CD8-positive, alpha-beta T cell (primary cell): ENCODE measurements at regions of chr12 and their contacts with region 1.

Region 1: DNA sequence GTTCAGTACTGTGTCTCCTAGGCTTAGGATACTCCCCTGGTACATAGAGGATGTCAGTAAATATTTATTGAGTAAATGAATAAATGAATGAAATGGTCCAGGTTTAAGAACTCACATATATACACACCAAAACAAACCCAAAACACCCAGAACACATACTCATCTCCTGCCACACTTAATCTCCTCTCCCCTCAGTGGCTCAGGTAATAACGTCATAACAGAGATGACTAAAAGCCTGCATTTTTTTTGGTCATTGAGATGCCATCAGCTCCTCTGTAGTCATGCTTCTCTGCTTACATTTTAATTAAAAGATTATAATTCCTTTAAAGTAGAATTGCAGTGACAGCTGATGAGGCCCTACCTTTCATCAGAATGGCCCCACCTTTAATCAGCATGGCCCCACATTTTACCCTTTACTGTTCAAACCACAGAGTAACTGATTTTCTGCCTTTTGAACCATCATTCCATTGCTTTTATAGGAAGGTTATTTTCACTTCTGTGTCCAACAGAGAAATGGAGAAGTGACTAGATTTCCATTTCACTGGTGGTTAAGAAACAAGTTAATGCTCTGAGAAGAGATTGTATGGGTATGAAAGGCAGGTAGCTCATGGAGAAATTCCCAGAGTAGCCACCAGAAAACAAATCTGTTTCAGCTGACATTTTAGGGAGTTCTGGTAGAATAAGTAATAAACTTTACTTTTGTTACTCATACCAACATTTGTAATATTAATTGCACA is 193.4 kb upstream of the ATP2B1 start:
- DNase-seq: no peak
- ATAC-seq: no peak
- H3K4me3 ChIP-seq: no peak overlapping the region
- H3K4me3 Mint-ChIP-seq: no peak overlapping the region
- H3K27ac ChIP-seq: no peak overlapping the region
- H3K27ac Mint-ChIP-seq: no peak overlapping the region
- H3K4me1 ChIP-seq: no peaks in the 10 kb centered on the region
- H3K4me1 Mint-ChIP-seq: no peaks in the 10 kb centered on the region
- H3K27me3 ChIP-seq: no peaks in the 10 kb centered on the region
- H3K27me3 Mint-ChIP-seq: no peaks in the 10 kb centered on the region
- CTCF ChIP-seq: no peak

Region 2: GRCh38 chr12:89833337-89834252 is 68.5 kb before region 1 on chr12:
- CTCF ChIA-PET with region 1: no interaction called
- POLR2A ChIA-PET with region 1: no interaction called
- intact Hi-C with region 1: loop called in 1 of 2 experiments (anchors 5 kb)
- DNase-seq: no peak
- ATAC-seq: no peak
- H3K4me3 ChIP-seq: no peak overlapping the region
- H3K4me3 Mint-ChIP-seq: no peak overlapping the region
- H3K27ac ChIP-seq: no peak overlapping the region
- H3K27ac Mint-ChIP-seq: no peak overlapping the region
- H3K4me1 ChIP-seq: no peaks in the 10 kb centered on the region
- H3K4me1 Mint-ChIP-seq: no peaks in the 10 kb centered on the region
- H3K27me3 ChIP-seq: no peaks in the 10 kb centered on the region
- H3K27me3 Mint-ChIP-seq: no peaks in the 10 kb centered on the region
- CTCF ChIP-seq: no peak

Region 3: DNA sequence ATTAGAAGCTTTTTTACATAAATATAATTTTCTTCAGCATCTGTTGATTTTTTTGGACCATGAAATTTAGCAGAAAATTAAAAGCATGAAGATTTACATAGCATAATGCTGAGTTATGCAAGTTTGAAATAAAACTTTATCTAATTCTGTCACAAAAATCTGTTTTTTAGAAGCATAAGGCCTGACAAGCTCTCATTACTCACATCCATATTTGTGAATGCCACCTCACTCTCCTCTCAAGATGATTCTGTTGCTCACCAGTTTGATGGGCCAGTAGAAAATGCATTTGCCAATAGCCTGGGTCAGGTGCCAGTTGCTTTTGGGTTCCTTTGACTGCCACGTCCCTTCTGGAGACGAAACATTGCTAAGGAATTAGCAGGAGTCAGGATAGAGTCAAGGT is 11.9 kb before region 1 on chr12:
- CTCF ChIA-PET with region 1: no interaction called
- POLR2A ChIA-PET with region 1: no interaction called
- intact Hi-C with region 1: no loop called
- DNase-seq: no peak
- ATAC-seq: no peak
- H3K4me3 ChIP-seq: no peak overlapping the region
- H3K4me3 Mint-ChIP-seq: no peak overlapping the region
- H3K27ac ChIP-seq: no peak overlapping the region
- H3K27ac Mint-ChIP-seq: no peak overlapping the region
- H3K4me1 ChIP-seq: peaks cover 10% of the 10 kb centered on the region
- H3K4me1 Mint-ChIP-seq: peaks cover 23% of the 10 kb centered on the region
- H3K27me3 ChIP-seq: no peaks in the 10 kb centered on the region
- H3K27me3 Mint-ChIP-seq: no peaks in the 10 kb centered on the region
- CTCF ChIP-seq: no peak

Region 4: GRCh38 chr12:89918181-89918868 is 16.3 kb after region 1 on chr12:
- CTCF ChIA-PET with region 1: no interaction called
- POLR2A ChIA-PET with region 1: no interaction called
- intact Hi-C with region 1: loop called in 1 of 2 experiments (anchors 2 kb)
- DNase-seq: peak in 2 of 9 experiments; percentile 15 to 34
- ATAC-seq: no peak
- H3K4me3 ChIP-seq: no peak overlapping the region
- H3K4me3 Mint-ChIP-seq: no peak overlapping the region
- H3K27ac ChIP-seq: no peak overlapping the region
- H3K27ac Mint-ChIP-seq: no peak overlapping the region
- H3K4me1 ChIP-seq: no peaks in the 10 kb centered on the region
- H3K4me1 Mint-ChIP-seq: peaks cover 4% of the 10 kb centered on the region
- H3K27me3 ChIP-seq: no peaks in the 10 kb centered on the region
- H3K27me3 Mint-ChIP-seq: no peaks in the 10 kb centered on the region
- CTCF ChIP-seq: no peak

Region 5: GRCh38 chr12:89935825-89936224 is 33.8 kb after region 1 on chr12:
- CTCF ChIA-PET with region 1: no interaction called
- POLR2A ChIA-PET with region 1: no interaction called
- intact Hi-C with region 1: no loop called
- DNase-seq: no peak
- ATAC-seq: no peak
- H3K4me3 ChIP-seq: no peak overlapping the region
- H3K4me3 Mint-ChIP-seq: no peak overlapping the region
- H3K27ac ChIP-seq: no peak overlapping the region
- H3K27ac Mint-ChIP-seq: no peak overlapping the region
- H3K4me1 ChIP-seq: no peaks in the 10 kb centered on the region
- H3K4me1 Mint-ChIP-seq: peaks cover 11% of the 10 kb centered on the region
- H3K27me3 ChIP-seq: no peaks in the 10 kb centered on the region
- H3K27me3 Mint-ChIP-seq: no peaks in the 10 kb centered on the region
- CTCF ChIP-seq: no peak